Panc1 (cell line): ENCODE measurements at regions of chr18 and their contacts with region 1.

Region 1: DNA sequence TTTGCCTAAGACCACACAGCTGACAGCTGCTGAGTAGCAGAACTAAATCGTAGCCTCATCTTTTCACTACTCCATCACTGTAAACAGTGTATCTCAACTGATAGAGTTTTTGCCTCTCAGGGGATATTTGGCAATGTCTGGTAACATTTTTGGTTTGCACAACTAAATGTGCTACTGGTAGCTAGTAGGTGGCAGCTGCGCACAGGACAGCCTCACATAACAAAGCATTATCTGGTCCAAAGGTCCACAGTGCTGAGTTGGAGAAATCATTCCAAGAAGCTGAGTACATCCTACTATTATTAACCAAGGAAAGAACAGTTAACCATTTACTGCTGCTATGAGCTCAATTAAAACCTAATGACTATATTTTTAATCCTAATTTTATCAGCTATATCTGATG is 6.1 kb upstream of the CCDC102B start:
- DNase-seq: no peak
- ATAC-seq: no peak
- H3K4me3 ChIP-seq: no peak overlapping the region
- H3K27ac ChIP-seq: no peak overlapping the region
- H3K4me1 ChIP-seq: no peaks in the 10 kb centered on the region
- H3K27me3 ChIP-seq: no peaks in the 10 kb centered on the region
- CTCF ChIP-seq: no peak

Region 2: GRCh38 chr18:68221111-68221724 is 570.6 kb before region 1 on chr18:
- CTCF ChIA-PET with region 1: no interaction called
- POLR2A ChIA-PET with region 1: interaction called, 11 read pairs
- in situ Hi-C with region 1: no loop called
- intact Hi-C with region 1: no loop called
- DNase-seq: no peak
- ATAC-seq: no peak
- H3K4me3 ChIP-seq: no peak overlapping the region
- H3K27ac ChIP-seq: no peak overlapping the region
- H3K4me1 ChIP-seq: no peaks in the 10 kb centered on the region
- H3K27me3 ChIP-seq: no peaks in the 10 kb centered on the region
- CTCF ChIP-seq: no peak

Region 3: GRCh38 chr18:68596016-68596415 is 195.8 kb before region 1 on chr18:
- CTCF ChIA-PET with region 1: no interaction called
- POLR2A ChIA-PET with region 1: no interaction called
- in situ Hi-C with region 1: no loop called
- intact Hi-C with region 1: no loop called
- DNase-seq: no peak
- ATAC-seq: no peak
- H3K4me3 ChIP-seq: no peak overlapping the region
- H3K27ac ChIP-seq: no peak overlapping the region
- H3K4me1 ChIP-seq: no peaks in the 10 kb centered on the region
- H3K27me3 ChIP-seq: no peaks in the 10 kb centered on the region
- CTCF ChIP-seq: no peak